Naive thymus-derived CD4-positive, alpha-beta T cell (primary cell): ENCODE measurements at regions of chr4 and their contacts with region 1.

Region 1: GRCh38 chr4:108109997-108110416 is 58.7 kb downstream of the LEF1 start:
- DNase-seq: no peak
- ATAC-seq: no peak
- H3K4me3 ChIP-seq: peak overlapping the region; percentile 7
- H3K4me3 Mint-ChIP-seq: peak overlapping the region; percentile 69 to 89 (median 78)
- H3K27ac ChIP-seq: peak overlapping the region; percentile 80
- H3K27ac Mint-ChIP-seq: peak overlapping the region; percentile 84 to 98 (median 90)
- H3K4me1 ChIP-seq: peaks cover 72 to 98% of the 10 kb centered on the region in 2 donors
- H3K4me1 Mint-ChIP-seq: peaks cover 70 to 97% (median 95%) of the 10 kb centered on the region in 7 donors
- H3K27me3 ChIP-seq: no peaks in the 10 kb centered on the region
- H3K27me3 Mint-ChIP-seq: no peaks in the 10 kb centered on the region

Region 2: GRCh38 chr4:106818764-106819163 is 1291.2 kb before region 1 on chr4:
- CTCF ChIA-PET with region 1: no interaction called
- POLR2A ChIA-PET with region 1: no interaction called
- intact Hi-C with region 1: no loop called
- DNase-seq: no peak
- ATAC-seq: no peak
- H3K4me3 ChIP-seq: no peak overlapping the region
- H3K4me3 Mint-ChIP-seq: no peak overlapping the region
- H3K27ac ChIP-seq: no peak overlapping the region
- H3K27ac Mint-ChIP-seq: no peak overlapping the region
- H3K4me1 ChIP-seq: no peaks in the 10 kb centered on the region
- H3K4me1 Mint-ChIP-seq: no peaks in the 10 kb centered on the region
- H3K27me3 ChIP-seq: no peaks in the 10 kb centered on the region
- H3K27me3 Mint-ChIP-seq: no peaks in the 10 kb centered on the region

Region 3: GRCh38 chr4:108053251-108053711 is 56.7 kb before region 1 on chr4:
- CTCF ChIA-PET with region 1: interaction called, 3 read pairs
- POLR2A ChIA-PET with region 1: interaction called, 9 read pairs
- intact Hi-C with region 1: loop called in 1 of 2 experiments (anchors 2 kb)
- DNase-seq: no peak
- ATAC-seq: no peak
- H3K4me3 ChIP-seq: no peak overlapping the region
- H3K4me3 Mint-ChIP-seq: peak overlapping the region; percentile 36 to 84 (median 54)
- H3K27ac ChIP-seq: peak overlapping the region; percentile 66
- H3K27ac Mint-ChIP-seq: peak overlapping the region; percentile 82 to 99 (median 93)
- H3K4me1 ChIP-seq: peaks cover 15 to 82% of the 10 kb centered on the region in 2 donors
- H3K4me1 Mint-ChIP-seq: peaks cover 56 to 100% (median 94%) of the 10 kb centered on the region in 7 donors
- H3K27me3 ChIP-seq: no peaks in the 10 kb centered on the region
- H3K27me3 Mint-ChIP-seq: no peaks in the 10 kb centered on the region

Region 4: DNA sequence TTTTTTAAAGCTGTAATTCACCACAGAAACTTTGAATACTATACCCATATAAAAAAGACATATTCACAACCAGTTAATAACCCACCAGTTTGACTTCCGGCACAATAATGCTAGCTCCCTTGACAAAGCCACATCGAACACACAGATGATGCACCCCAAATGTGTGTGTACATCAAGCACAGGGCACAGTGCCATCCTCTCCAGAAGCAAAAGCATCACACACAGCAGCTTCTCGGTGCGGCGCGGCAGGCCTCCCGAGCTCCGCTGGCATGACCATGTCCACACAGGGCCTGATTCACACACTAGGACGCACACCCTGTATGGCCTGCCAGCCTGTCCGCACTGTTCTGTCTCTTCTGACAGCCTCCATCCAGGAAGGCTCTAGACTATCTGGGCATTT is 29.3 kb before region 1 on chr4:
- CTCF ChIA-PET with region 1: interaction called, 4 read pairs
- POLR2A ChIA-PET with region 1: interaction called, 14 read pairs
- intact Hi-C with region 1: loop called in 1 of 2 experiments (anchors 2 kb)
- DNase-seq: peak in 8 of 9 donors; percentile 21 to 85 (median 78)
- ATAC-seq: peak; percentile 90
- H3K4me3 ChIP-seq: peak overlapping the region; percentile 3
- H3K4me3 Mint-ChIP-seq: peak overlapping the region; percentile 75 to 89 (median 82)
- H3K27ac ChIP-seq: peak overlapping the region; percentile 71
- H3K27ac Mint-ChIP-seq: peak overlapping the region; percentile 83 to 98 (median 95)
- H3K4me1 ChIP-seq: peaks cover 0 to 53% of the 10 kb centered on the region in 2 donors
- H3K4me1 Mint-ChIP-seq: peaks cover 24 to 90% (median 75%) of the 10 kb centered on the region in 7 donors
- H3K27me3 ChIP-seq: no peaks in the 10 kb centered on the region
- H3K27me3 Mint-ChIP-seq: no peaks in the 10 kb centered on the region

Region 5: GRCh38 chr4:108126806-108127205 is 16.8 kb after region 1 on chr4:
- CTCF ChIA-PET with region 1: interaction called, 5 read pairs
- POLR2A ChIA-PET with region 1: interaction called, 400 read pairs
- intact Hi-C with region 1: loop called in 1 of 2 experiments (anchors 2 kb)
- DNase-seq: no peak
- ATAC-seq: no peak
- H3K4me3 ChIP-seq: no peak overlapping the region
- H3K4me3 Mint-ChIP-seq: peak overlapping the region; percentile 5 to 85 (median 54)
- H3K27ac ChIP-seq: peak overlapping the region; percentile 69
- H3K27ac Mint-ChIP-seq: peak overlapping the region; percentile 2 to 98 (median 90)
- H3K4me1 ChIP-seq: peaks cover 0 to 78% of the 10 kb centered on the region in 2 donors
- H3K4me1 Mint-ChIP-seq: peaks cover 38 to 99% (median 92%) of the 10 kb centered on the region in 7 donors
- H3K27me3 ChIP-seq: no peaks in the 10 kb centered on the region
- H3K27me3 Mint-ChIP-seq: no peaks in the 10 kb centered on the region

Region 6: GRCh38 chr4:108155373-108155772 is 45.4 kb after region 1 on chr4:
- CTCF ChIA-PET with region 1: interaction called, 5 read pairs
- POLR2A ChIA-PET with region 1: interaction called, 160 read pairs
- intact Hi-C with region 1: loop called in 1 of 2 experiments (anchors 2 kb)
- DNase-seq: peak in 2 of 9 donors; percentile 38 to 65
- ATAC-seq: peak; percentile 65
- H3K4me3 ChIP-seq: peak overlapping the region; percentile 14
- H3K4me3 Mint-ChIP-seq: peak overlapping the region; percentile 83 to 100 (median 97)
- H3K27ac ChIP-seq: peak overlapping the region; percentile 87
- H3K27ac Mint-ChIP-seq: peak overlapping the region; percentile 66 to 97 (median 92)
- H3K4me1 ChIP-seq: peaks cover 35 to 72% of the 10 kb centered on the region in 2 donors
- H3K4me1 Mint-ChIP-seq: peaks cover 31 to 99% (median 80%) of the 10 kb centered on the region in 7 donors
- H3K27me3 ChIP-seq: no peaks in the 10 kb centered on the region
- H3K27me3 Mint-ChIP-seq: no peaks in the 10 kb centered on the region

Region 7: GRCh38 chr4:108483079-108483478 is 373.1 kb after region 1 on chr4:
- CTCF ChIA-PET with region 1: no interaction called
- POLR2A ChIA-PET with region 1: no interaction called
- intact Hi-C with region 1: loop called in 1 of 2 experiments (anchors 5 kb)
- DNase-seq: peak in 4 of 9 donors; percentile 10 to 31 (median 18)
- ATAC-seq: peak; percentile 31
- H3K4me3 ChIP-seq: peak overlapping the region; percentile 11
- H3K4me3 Mint-ChIP-seq: peak overlapping the region; percentile 38 to 82 (median 74)
- H3K27ac ChIP-seq: no peak overlapping the region
- H3K27ac Mint-ChIP-seq: peak overlapping the region in 8 of 9 donors; percentile 34 to 92 (median 68)
- H3K4me1 ChIP-seq: peaks cover 18 to 21% of the 10 kb centered on the region in 2 donors
- H3K4me1 Mint-ChIP-seq: peaks cover 26 to 47% (median 44%) of the 10 kb centered on the region in 7 donors
- H3K27me3 ChIP-seq: no peaks in the 10 kb centered on the region
- H3K27me3 Mint-ChIP-seq: no peaks in the 10 kb centered on the region